ENCODE measurements at regions of chr2 and their contacts with region 1.

Region 1: DNA sequence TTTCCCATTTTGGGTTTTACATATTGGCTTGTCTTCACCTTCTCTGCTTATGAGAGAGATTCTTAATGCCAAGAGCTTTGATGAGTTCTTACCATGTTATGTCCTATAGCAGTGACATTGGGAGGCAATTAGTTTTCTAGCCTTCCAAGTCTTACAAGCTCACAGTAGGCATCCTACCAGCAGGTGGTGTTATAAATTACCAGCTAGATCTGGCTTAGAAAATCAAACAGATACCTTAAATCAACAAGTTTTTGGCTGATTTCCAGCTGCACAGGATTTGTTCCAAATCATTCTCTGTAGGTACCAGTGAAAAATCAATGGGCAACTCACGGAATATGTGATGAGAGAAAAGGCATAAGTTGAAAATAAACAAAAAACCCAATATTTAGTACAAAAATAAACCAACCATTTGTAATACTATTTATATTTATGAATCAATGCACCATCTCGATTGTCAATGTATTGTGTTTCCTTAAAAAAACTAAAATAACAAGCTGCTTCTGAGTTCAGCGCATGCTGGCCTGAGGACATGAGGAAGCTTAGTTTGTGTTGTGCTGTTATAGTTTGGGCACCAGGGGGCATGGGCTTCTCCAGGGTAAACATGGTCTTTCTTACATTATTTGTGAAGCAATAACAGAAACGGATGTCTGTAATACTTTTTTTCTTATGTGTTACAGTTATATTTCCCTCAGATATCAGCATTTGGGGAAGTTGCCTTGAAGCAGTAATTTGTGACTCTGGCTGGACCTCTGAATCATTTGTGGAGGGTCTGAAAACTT is 34.1 kb upstream of the NXPH2 start:
- DNase-seq: peak; percentile 13
- ATAC-seq: peak; percentile 80
- H3K4me3 ChIP-seq: no peak overlapping the region
- H3K27ac ChIP-seq: no peak overlapping the region
- H3K4me1 ChIP-seq: no peaks in the 10 kb centered on the region
- H3K27me3 ChIP-seq: no peaks in the 10 kb centered on the region
- CTCF ChIP-seq: peak; percentile 14 to 55 (median 53); a peak in 4 of 6 replicates
- POLR2A ChIP-seq: no peak
- RAD21 ChIP-seq: no peak

Region 2: DNA sequence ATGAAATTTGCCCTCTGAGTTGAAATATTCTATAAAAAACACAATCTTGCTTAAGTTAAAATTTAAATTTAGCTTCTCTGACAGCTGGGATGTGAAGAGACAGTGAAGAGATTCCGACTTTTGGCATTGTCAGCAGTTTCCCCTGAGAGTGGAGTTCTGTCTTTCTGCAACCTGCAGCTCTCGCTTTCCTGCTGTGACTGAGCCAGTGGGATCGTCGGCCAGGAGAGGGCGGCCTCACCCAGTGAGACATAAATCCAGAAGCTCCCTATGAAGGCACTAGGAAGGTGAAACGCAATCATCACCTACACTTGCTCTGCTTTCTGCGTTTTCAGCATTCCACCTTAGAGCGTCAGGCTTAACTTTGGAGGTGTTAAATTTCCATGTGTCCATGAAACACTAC is 925.5 kb before region 1 on chr2:
- CTCF ChIA-PET with region 1: interaction called, 11 read pairs
- POLR2A ChIA-PET with region 1: no interaction called
- RAD21 ChIA-PET with region 1: no interaction called
- intact Hi-C with region 1: no loop called
- DNase-seq: peak; percentile 10
- ATAC-seq: peak; percentile 69
- H3K4me3 ChIP-seq: no peak overlapping the region
- H3K27ac ChIP-seq: no peak overlapping the region
- H3K4me1 ChIP-seq: peaks cover 0 to 4% of the 10 kb centered on the region in 2 experiments; a peak in 1 of 4 replicates
- H3K27me3 ChIP-seq: no peaks in the 10 kb centered on the region
- CTCF ChIP-seq: peak; percentile 45 to 74 (median 68); a peak in 5 of 6 replicates
- POLR2A ChIP-seq: no peak
- RAD21 ChIP-seq: peak; percentile 63

Region 3: GRCh38 chr2:139055202-139055601 is 240.9 kb after region 1 on chr2:
- CTCF ChIA-PET with region 1: no interaction called
- POLR2A ChIA-PET with region 1: no interaction called
- RAD21 ChIA-PET with region 1: no interaction called
- intact Hi-C with region 1: no loop called
- DNase-seq: no peak
- ATAC-seq: no peak
- H3K4me3 ChIP-seq: no peak overlapping the region
- H3K27ac ChIP-seq: no peak overlapping the region
- H3K4me1 ChIP-seq: no peaks in the 10 kb centered on the region
- H3K27me3 ChIP-seq: no peaks in the 10 kb centered on the region
- CTCF ChIP-seq: no peak
- POLR2A ChIP-seq: no peak
- RAD21 ChIP-seq: no peak